IMR-90 (cell line): ENCODE measurements at regions of chr11 and their contacts with region 1.

Region 1: GRCh38 chr11:38206663-38207062 is 1608.6 kb upstream of the RAG2 start:
- DNase-seq: no peak
- ATAC-seq: no peak
- H3K4me3 ChIP-seq: no peak overlapping the region
- H3K27ac ChIP-seq: no peak overlapping the region
- H3K4me1 ChIP-seq: no peaks in the 10 kb centered on the region
- H3K27me3 ChIP-seq: no peaks in the 10 kb centered on the region
- CTCF ChIP-seq: no peak
- POLR2A ChIP-seq: no peak
- RAD21 ChIP-seq: no peak

Region 2: DNA sequence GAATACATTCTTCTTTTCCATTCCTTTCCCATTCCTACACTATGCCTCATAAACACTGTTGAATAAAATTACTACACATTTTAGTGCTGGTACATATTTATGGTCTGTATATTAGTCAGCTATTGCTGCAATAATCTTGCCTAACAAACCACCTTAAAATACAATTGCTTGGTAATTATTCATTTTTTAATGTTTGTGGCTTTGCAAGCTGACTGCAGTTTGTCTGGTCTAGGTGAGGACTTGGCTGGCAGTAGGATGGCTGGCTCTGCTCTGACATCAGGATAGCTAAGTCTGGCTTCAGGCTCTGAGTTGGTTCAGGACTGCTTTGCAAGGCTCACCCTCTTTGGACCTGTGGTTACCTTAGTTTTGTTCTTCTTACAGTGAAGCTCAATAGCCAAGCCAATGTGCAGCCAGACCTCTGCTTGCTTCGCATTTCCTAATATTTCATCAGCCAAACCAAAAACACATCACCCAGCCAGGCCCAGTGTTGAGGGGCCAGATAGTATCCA is 695.2 kb before region 1 on chr11:
- CTCF ChIA-PET with region 1: no interaction called
- POLR2A ChIA-PET with region 1: no interaction called
- dilution Hi-C with region 1: no loop called
- in situ Hi-C with region 1: no loop called
- intact Hi-C with region 1: no loop called
- DNase-seq: peak; percentile 63
- ATAC-seq: peak; percentile 88
- H3K4me3 ChIP-seq: no peak overlapping the region
- H3K27ac ChIP-seq: no peak overlapping the region
- H3K4me1 ChIP-seq: peaks cover 6% of the 10 kb centered on the region
- H3K27me3 ChIP-seq: no peaks in the 10 kb centered on the region
- CTCF ChIP-seq: no peak
- POLR2A ChIP-seq: no peak
- RAD21 ChIP-seq: no peak

Region 3: DNA sequence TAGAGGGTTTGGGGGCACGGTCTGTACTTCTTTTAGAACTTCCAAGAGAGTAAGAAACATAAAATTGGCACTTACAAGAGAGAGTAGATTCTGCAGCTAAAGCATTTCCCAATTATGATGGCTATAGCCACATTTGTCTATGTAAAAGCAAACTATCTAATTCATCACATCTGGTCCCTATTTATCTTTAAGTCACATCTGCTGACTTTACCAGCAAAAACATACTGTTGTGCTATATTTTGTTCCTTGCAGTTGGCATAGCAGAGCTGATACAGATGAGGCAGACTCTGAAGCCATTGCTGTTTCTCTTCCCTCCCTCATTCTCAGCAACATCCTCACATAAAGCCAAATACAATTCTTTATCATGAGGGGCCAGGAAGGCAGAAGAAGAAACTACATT is 75.1 kb before region 1 on chr11:
- CTCF ChIA-PET with region 1: no interaction called
- POLR2A ChIA-PET with region 1: no interaction called
- dilution Hi-C with region 1: no loop called
- in situ Hi-C with region 1: no loop called
- intact Hi-C with region 1: loop called (anchors 2 kb)
- DNase-seq: no peak
- ATAC-seq: no peak
- H3K4me3 ChIP-seq: no peak overlapping the region
- H3K27ac ChIP-seq: no peak overlapping the region
- H3K4me1 ChIP-seq: no peaks in the 10 kb centered on the region
- H3K27me3 ChIP-seq: no peaks in the 10 kb centered on the region
- CTCF ChIP-seq: no peak
- POLR2A ChIP-seq: no peak
- RAD21 ChIP-seq: no peak